ENCODE measurements at regions of chr17 and their contacts with region 1.

Region 1: DNA sequence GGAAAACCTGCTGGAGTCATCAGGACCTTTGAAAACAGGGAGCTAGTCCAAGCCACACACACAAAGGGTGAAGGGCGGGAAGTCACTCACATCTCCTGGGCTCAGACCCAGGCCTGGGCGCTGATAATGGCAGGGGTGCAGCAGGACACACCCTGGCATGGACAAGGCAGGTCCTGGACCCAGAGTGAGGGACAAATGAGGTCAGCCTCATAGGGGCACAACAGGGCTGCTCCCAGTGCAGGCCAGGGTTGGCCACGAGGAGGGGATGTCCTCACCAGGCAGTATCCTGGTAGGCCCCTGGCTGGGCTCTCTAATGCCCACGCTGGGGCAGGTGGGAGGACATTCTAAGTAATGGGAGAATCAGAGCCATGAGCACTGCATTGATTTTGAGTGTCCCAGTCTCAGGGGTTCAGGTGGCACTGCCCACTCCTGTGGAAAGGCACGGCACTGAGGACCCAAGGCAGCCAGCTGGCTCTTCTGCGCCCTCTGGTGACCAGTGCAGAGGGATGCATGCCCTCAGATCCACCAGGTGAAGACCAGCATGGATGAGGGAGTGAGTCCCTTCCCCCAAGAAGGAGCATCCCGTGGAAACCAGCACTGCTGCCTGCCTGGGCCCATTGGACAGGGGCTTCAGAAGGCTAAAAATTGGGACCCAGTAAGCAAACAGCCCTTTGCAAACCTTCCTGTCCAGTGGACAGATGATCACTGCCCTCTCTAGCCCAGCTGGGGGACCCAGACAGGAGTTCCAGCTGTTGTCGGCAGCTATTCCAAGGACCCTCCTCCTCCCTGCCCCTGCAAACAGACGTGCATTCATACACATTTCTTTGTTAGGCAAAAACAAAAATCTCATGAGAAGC is 23.4 kb upstream of the SREBF1 start:
- DNase-seq: peak; percentile 83
- ATAC-seq: peak; percentile 91
- H3K4me3 Mint-ChIP-seq: no peak overlapping the region
- H3K27ac Mint-ChIP-seq: no peak overlapping the region
- H3K4me1 Mint-ChIP-seq: peaks cover 27% of the 10 kb centered on the region
- H3K27me3 Mint-ChIP-seq: no peaks in the 10 kb centered on the region

Region 2: DNA sequence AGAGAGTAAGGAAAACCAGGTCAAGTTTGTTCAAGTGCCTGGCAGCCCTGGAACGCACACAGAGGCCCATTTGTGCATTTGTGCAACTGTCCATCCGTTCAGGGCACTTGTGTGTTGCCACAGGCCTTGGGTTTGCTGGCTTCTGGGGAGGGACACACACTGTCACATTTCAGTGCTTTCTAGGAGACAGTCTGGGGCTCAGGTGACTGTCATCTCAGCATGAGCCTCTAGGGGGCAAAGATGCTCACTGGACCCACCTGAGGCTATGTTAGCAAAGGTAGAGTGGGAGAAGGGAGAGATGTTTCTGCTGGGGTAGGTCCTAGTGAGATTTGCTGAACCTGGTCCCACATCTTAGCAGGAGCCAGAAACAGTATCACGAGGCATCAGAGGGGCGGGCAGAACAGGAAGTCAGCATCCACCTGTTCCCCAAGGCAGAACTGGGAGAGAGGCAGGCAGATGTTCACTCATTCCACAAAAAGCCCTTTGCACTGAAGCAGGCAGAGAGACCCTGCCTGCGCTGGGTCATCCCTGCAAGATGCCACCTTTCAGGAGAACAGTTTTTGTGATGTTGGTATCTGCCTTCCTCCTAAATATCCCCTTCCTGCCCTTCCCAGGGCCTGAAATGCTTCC is 130.4 kb before region 1 on chr17:
- CTCF ChIA-PET with region 1: interaction called, 5 read pairs
- POLR2A ChIA-PET with region 1: no interaction called
- intact Hi-C with region 1: loop called (anchors 1 kb)
- DNase-seq: peak; percentile 71
- ATAC-seq: peak; percentile 96
- H3K4me3 Mint-ChIP-seq: no peak overlapping the region
- H3K27ac Mint-ChIP-seq: no peak overlapping the region
- H3K4me1 Mint-ChIP-seq: peaks cover 14% of the 10 kb centered on the region
- H3K27me3 Mint-ChIP-seq: no peaks in the 10 kb centered on the region

Region 3: DNA sequence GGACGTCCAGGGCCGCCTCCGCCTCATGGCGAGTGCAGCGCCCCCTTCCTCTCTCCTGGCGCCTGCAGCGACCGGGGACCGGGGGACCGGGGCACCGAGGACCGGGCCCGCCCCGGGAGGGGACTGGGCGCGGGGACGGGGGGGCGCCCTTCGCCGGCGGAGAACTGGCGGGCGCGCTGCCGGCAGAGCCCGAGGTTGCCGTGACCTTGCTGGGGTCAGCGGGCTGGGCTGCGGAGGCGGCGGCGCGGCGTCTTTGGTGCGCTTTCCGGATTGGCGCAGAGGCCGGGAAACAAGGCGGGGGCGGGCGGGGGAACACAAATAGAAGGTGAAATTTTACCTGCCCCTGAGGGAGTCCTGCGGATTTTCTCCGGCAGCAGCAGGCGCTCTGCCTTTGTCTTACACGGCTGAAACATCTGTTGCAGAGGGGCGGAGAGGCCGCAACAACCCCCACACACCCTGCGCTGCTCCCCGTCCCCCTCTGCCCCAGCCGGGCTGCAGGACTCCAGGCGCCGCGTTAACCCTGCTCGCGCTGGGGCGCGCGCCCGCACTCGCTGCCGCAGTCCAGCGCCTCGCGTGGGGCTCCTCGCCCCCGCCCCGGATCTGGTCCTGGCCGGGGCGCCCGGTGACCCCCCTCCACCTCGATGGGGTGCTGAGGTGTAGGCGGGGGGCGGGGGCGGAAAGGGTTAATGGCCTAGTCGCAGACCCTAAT is 76.9 kb before region 1 on chr17:
- CTCF ChIA-PET with region 1: interaction called, 4 read pairs
- POLR2A ChIA-PET with region 1: no interaction called
- intact Hi-C with region 1: loop called in 1 of 2 experiments (anchors 2 kb)
- DNase-seq: peak; percentile 78
- ATAC-seq: peak; percentile 58
- H3K4me3 Mint-ChIP-seq: peak overlapping the region; percentile 55
- H3K27ac Mint-ChIP-seq: no peak overlapping the region
- H3K4me1 Mint-ChIP-seq: peaks cover 18% of the 10 kb centered on the region
- H3K27me3 Mint-ChIP-seq: no peaks in the 10 kb centered on the region

Region 4: DNA sequence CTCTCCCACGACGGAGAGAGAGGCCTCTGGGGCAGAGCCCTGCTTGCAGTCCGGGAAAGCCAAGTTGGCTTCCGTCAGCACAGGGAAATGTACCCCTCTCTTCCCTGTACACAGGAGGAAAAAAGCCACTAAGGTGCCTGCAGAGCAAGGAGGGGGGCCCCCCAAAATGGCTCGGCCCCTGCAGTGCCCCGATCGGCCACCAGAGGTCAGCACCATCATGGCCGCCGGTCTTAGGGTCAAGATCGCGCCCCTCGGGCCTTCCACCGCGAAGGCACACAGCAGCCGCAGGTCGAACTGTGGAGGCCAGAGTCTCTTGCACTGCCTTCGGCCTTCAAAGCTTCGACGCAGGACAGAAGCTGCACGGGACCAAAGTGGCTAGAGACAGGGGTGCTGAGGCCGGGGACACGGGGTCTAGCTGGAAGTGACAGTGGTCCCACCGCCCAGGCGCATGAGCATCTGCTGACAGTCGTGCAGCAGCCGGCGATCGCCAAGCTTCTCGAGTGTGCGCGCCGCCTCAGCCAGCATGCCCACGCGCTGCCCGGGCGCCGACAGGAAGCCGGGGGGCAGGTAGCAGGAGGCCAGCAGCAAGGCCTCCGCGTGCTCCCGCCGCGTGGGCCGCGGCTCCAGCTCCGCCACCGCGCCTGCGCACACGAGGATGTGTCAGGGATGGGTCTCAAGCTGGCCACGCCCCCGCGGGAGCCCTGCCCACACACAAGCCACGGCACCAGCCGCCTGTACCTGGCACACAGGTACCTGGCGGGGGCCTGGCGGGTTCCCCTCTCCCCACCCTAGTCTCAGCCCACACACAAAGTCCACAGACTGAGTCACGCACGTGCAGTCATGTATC is 47.7 kb before region 1 on chr17:
- CTCF ChIA-PET with region 1: interaction called, 39 read pairs
- POLR2A ChIA-PET with region 1: no interaction called
- intact Hi-C with region 1: loop called (anchors 1 kb)
- DNase-seq: peak; percentile 78
- ATAC-seq: peak; percentile 37
- H3K4me3 Mint-ChIP-seq: no peak overlapping the region
- H3K27ac Mint-ChIP-seq: no peak overlapping the region
- H3K4me1 Mint-ChIP-seq: peaks cover 11% of the 10 kb centered on the region
- H3K27me3 Mint-ChIP-seq: no peaks in the 10 kb centered on the region

Region 5: DNA sequence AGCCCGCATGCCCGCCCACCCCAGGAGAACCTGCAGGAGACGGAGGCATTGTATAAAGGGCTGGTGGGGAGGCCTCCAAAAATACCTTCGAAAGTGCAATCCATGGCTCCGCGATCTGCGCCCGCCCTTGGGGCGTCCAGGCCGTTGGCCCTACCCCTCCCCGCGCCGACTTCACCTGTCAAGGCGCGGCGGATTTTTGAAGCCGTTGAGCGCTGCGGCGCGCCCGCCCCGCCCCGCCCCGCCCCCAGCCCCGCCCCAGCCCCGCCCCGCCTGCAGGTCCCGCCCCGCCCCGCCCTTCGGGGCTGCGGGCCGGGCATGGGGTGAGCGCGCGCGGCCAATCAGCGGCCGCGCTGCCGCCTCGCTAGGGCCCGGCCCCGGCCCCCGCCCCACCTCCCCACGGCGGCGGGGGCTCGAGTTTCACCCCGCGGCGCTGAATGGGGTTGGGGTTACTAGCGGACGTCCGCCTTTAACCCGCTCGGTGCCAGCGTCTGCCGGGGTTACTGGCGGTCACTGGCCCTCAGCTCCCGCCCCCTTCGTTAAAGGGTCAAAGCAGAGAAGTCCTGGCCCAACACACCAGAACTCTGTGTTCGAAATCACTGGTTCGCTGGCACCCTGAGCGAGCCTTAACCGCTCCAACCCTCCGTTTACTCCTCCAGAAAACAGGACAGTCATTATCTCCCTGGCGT is 36.6 kb before region 1 on chr17:
- CTCF ChIA-PET with region 1: interaction called, 6 read pairs
- POLR2A ChIA-PET with region 1: no interaction called
- intact Hi-C with region 1: loop called (anchors 2 kb)
- DNase-seq: peak; percentile 90
- ATAC-seq: peak; percentile 80
- H3K4me3 Mint-ChIP-seq: peak overlapping the region; percentile 72
- H3K27ac Mint-ChIP-seq: peak overlapping the region; percentile 96
- H3K4me1 Mint-ChIP-seq: peaks cover 92% of the 10 kb centered on the region
- H3K27me3 Mint-ChIP-seq: no peaks in the 10 kb centered on the region

Region 6: GRCh38 chr17:17849845-17850373 is 10.2 kb before region 1 on chr17:
- CTCF ChIA-PET with region 1: interaction called, 10 read pairs
- POLR2A ChIA-PET with region 1: interaction called, 3 read pairs
- intact Hi-C with region 1: no loop called
- DNase-seq: peak; percentile 90
- ATAC-seq: peak; percentile 64
- H3K4me3 Mint-ChIP-seq: peak overlapping the region; percentile 34
- H3K27ac Mint-ChIP-seq: peak overlapping the region; percentile 95
- H3K4me1 Mint-ChIP-seq: peaks cover 72% of the 10 kb centered on the region
- H3K27me3 Mint-ChIP-seq: no peaks in the 10 kb centered on the region